ENCODE measurements at regions of chr5 and their contacts with region 1.

Region 1: DNA sequence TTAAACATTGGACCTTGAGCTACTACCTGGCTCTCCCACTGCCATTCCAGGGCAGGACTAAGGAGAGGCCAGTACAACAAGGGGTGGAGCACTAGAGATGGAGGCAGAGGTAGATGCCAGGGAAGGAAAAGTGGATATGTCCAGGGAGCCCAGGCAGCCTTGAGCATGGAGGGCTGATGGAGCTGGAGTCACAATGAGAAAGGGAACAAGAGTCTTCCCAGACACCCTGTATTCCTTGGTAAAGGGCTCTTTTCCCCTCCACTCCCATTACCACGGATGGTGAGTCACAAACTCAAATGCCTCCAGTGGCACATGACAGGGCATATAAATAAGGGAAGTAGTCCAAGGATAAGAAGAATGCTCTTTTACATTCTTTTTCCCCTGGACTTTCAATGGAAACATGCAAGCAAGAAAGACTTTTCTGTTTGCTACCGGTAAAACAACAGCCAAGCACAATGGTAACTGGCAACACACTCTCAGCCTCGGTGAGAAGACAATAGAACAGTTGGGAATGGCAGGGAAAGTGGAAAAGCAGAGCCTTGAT is 16.7 kb downstream of the ERAP1 start:
- DNase-seq: no peak
- ATAC-seq: no peak
- H3K4me3 ChIP-seq: no peak overlapping the region
- H3K4me3 Mint-ChIP-seq: no peak overlapping the region
- H3K27ac ChIP-seq: peak overlapping the region; percentile 4
- H3K27ac Mint-ChIP-seq: peak overlapping the region; percentile 71 to 81
- H3K4me1 ChIP-seq: peaks cover 7 to 11% of the 10 kb centered on the region in 2 experiments
- H3K4me1 Mint-ChIP-seq: peaks cover 42 to 46% (median 44%) of the 10 kb centered on the region in 3 donors
- H3K27me3 ChIP-seq: no peaks in the 10 kb centered on the region
- H3K27me3 Mint-ChIP-seq: no peaks in the 10 kb centered on the region

Region 2: GRCh38 chr5:97231025-97231636 is 440.1 kb after region 1 on chr5:
- CTCF ChIA-PET with region 1: interaction called in 1 of 2 experiments, 14 read pairs
- POLR2A ChIA-PET with region 1: no interaction called
- DNase-seq: peak in 11 of 35 experiments; percentile 0 to 63 (median 12)
- ATAC-seq: peak; percentile 47 to 61 (median 56)
- H3K4me3 ChIP-seq: no peak overlapping the region
- H3K4me3 Mint-ChIP-seq: no peak overlapping the region
- H3K27ac ChIP-seq: no peak overlapping the region
- H3K27ac Mint-ChIP-seq: no peak overlapping the region
- H3K4me1 ChIP-seq: no peaks in the 10 kb centered on the region
- H3K4me1 Mint-ChIP-seq: peaks cover 0 to 1% (median 0%) of the 10 kb centered on the region in 3 donors
- H3K27me3 ChIP-seq: no peaks in the 10 kb centered on the region
- H3K27me3 Mint-ChIP-seq: peaks cover 5 to 17% of the 10 kb centered on the region in 2 donors

Measured in T-cell (primary cell).